Dorsolateral prefrontal cortex (tissue), 120 donors: ENCODE measurements at regions of chr10 and their contacts with region 1.

Region 1: DNA sequence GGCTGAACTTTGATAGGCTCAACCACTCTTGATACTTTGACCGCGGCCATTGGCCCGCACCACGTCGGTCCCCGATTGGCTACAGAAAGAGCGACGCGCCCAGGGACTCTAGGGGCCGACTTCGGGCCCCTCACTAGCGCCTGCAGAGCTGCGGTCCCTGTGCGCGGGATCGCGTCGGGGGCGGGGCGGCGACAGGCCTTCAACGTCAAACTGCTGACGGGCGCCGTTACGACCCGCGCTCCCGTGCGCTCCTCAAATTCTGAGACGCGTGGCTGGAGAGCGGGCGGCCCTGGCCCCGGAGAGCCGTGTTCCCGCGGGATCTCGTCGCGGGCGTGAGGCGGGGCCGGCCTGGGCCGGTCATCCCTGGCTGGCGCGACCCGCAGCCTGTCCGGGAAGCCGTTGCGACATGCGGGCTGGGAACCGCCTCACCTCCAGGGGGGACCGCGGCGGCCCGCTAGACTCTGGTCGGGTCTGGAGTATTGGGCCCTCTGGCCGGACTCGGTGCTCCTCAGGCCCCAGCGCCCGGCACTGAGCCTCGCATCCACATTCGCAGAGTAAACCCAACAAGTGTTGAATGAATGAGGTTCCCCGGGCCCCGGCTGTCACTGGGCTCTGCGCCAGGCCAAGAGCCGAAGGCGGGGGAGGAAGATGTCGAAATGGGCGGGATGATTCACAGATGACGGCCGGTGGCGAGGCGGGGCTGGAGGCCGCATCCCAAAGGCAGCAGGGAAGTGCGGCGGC is 644 bp upstream of the SLC25A28 start:
- DNase-seq: peak; percentile 83 to 98 (median 90)
- H3K4me3 ChIP-seq: peak overlapping the region; percentile 63 to 98 (median 91)
- H3K27ac ChIP-seq: peak overlapping the region; percentile 70 to 100 (median 98)
- H3K27me3 ChIP-seq: no peaks in the 10 kb centered on the region
- CTCF ChIP-seq: peak in 16 of 56 donors; percentile 0 to 49 (median 10)

Region 2: DNA sequence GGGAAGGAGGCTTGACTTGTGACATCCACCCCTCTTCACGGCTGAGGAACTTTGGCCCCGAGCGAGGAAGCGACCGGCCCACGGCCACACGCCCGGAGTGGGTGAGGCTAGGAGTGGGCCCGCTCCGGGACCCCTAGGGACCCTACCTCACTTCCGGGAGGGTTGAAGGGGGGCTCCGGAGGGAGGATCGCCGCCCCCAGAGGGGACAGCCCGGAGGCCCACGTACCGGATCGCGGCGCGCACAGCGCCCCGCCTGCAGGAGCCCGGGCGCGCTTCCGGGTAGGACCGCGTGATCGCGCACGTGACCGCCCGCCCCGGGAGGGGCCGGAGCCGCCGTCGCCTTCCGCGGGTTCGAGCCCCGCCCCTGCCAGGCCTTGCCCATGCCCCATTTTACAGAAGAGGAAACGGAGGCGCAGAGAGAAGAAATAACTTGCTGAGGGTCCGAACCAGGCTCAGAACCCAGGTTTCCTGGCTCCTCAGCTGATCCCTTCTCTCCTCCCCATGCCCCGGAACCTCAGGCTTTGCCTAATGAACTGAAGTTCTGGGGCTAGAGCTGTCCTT is 1174.1 kb before region 1 on chr10 and contains the start of gene HPS1:
- intact Hi-C with region 1: loop called in 1 of 2 experiments (anchors 10 kb)
- DNase-seq: peak; percentile 59 to 90 (median 74)
- H3K4me3 ChIP-seq: peak within 1 kb of the TSS; percentile 52 to 98 (median 80)
- H3K27ac ChIP-seq: peak within 1 kb of the TSS; percentile 65 to 98 (median 92)
- H3K27me3 ChIP-seq: no peaks in the 10 kb centered on the region
- CTCF ChIP-seq: peak in 39 of 56 donors; percentile 5 to 63 (median 33)
- total RNA-seq, gene HPS1: 37.6 to 78.5 (median 54.4) TPM

Region 3: GRCh38 chr10:99430451-99431189 is 190.3 kb before region 1 on chr10 and contains the start of gene GOT1:
- intact Hi-C with region 1: loop called in 1 of 2 experiments (anchors 2 kb)
- DNase-seq: peak; percentile 87 to 97 (median 96)
- H3K4me3 ChIP-seq: peak within 1 kb of the TSS; percentile 74 to 100 (median 97)
- H3K27ac ChIP-seq: peak within 1 kb of the TSS; percentile 58 to 99 (median 93)
- H3K27me3 ChIP-seq: no peaks in the 10 kb centered on the region
- CTCF ChIP-seq: peak in 18 of 56 donors; percentile 5 to 52 (median 28)
- total RNA-seq, gene GOT1: 81.6 to 316 (median 220) TPM

Region 4: DNA sequence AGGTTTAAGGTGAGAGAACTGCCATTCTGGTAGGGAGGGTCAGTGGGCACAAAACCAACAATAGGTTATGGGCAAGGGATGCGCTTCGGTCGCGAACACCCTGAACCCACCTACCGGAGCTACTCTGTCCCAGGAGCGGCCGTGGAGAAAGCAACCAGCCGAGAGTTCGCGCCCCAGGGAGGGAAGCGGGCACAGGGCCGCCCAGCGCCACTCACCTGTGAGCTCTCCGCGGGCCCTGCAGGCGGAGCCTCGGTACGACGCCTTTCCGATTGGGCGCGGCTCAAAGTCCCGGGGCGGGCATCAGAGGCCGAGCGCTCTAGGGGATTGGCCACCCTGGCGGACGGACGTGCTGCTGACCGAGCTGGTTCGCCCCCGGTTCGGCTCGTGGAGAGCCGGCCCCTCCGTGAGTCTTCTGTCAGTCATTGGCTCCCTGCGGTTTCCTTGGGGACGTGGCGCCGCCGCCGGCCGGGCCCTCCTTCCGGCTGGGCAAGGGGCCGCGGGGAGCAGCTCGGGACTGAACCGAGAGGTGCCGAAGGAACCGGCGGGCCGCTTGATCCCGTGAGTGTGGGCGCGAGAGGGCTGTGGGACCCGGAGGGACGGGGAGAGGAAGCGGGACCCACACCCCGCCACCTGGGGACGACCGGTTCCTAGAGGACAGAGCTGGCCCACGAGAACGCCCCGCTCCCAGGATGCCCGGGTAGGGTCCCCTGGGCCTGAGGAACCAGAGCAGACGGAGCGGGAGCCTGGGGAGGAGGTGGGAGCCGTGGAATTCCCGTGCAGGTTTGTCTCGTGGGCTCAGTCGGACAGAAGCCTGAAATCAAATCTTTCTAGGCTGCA is 38.4 kb after region 1 on chr10 and contains the start of gene ENTPD7:
- intact Hi-C with region 1: loop called (anchors 2 to 5 kb)
- DNase-seq: peak; percentile 72 to 98 (median 94)
- H3K4me3 ChIP-seq: peak within 1 kb of the TSS; percentile 60 to 97 (median 84)
- H3K27ac ChIP-seq: peak within 1 kb of the TSS in 6 of 59 donors; percentile 5 to 68 (median 50)
- H3K27me3 ChIP-seq: no peaks in the 10 kb centered on the region
- CTCF ChIP-seq: peak in 53 of 56 donors; percentile 21 to 67 (median 44)
- total RNA-seq, gene ENTPD7: 2.1 to 7.5 (median 4.3) TPM

Region 5: DNA sequence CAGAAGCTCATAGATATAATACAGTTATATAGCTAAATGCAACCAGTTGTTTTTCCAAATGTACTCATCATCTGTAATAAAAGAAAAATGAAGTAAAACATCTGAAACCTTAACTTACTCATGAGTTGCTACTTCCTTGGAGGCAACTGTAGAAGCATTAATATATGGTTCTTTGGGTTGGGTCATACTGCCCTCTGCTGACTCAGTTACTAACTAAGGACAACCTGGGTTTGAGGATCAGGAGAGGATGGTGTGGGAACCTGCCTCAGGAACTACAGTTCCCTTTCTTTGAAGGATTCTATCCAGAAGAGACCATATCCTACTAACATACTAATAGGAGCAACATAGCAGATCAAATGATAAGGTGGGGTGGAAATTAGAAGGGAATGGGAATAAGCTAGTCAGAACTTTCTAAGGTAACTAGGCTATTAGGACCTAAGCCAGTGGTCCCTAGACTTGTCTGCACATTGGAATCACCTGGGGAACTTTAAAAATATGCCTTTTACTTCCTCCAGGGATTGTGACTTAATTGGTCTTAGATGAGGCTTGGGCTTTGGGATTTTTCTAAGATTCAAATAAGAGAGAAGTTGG is 90.3 kb after region 1 on chr10:
- intact Hi-C with region 1: loop called in 1 of 2 experiments (anchors 5 kb)
- DNase-seq: no peak
- H3K4me3 ChIP-seq: no peak overlapping the region
- H3K27ac ChIP-seq: no peak overlapping the region
- H3K27me3 ChIP-seq: no peaks in the 10 kb centered on the region
- CTCF ChIP-seq: peak in 52 of 56 donors; percentile 17 to 71 (median 51)

Region 6: GRCh38 chr10:99732033-99732912 is 111.4 kb after region 1 on chr10 and contains the starts of genes COX15 and CUTC:
- intact Hi-C with region 1: loop called (anchors 1 to 2 kb)
- DNase-seq: peak; percentile 90 to 97 (median 96)
- H3K4me3 ChIP-seq: peak within 1 kb of the TSS; percentile 67 to 100 (median 89)
- H3K27ac ChIP-seq: peak within 1 kb of the TSS; percentile 8 to 96 (median 84)
- H3K27me3 ChIP-seq: no peaks in the 10 kb centered on the region
- CTCF ChIP-seq: peak in 28 of 56 donors; percentile 6 to 59 (median 23)
- total RNA-seq, gene COX15: 27.2 to 59.3 (median 40.6) TPM
- total RNA-seq, gene CUTC: 10.9 to 32.6 (median 17.0) TPM

Region 7: GRCh38 chr10:99809931-99810615 is 189.2 kb after region 1 on chr10:
- intact Hi-C with region 1: no loop called
- DNase-seq: peak in 1 of 10 donors; percentile 27
- H3K4me3 ChIP-seq: no peak overlapping the region
- H3K27ac ChIP-seq: peak overlapping the region in 38 of 59 donors; percentile 2 to 82 (median 56)
- H3K27me3 ChIP-seq: no peaks in the 10 kb centered on the region
- CTCF ChIP-seq: no peak